ENCODE measurements at regions of chr19 and their contacts with region 1.

Region 1: DNA sequence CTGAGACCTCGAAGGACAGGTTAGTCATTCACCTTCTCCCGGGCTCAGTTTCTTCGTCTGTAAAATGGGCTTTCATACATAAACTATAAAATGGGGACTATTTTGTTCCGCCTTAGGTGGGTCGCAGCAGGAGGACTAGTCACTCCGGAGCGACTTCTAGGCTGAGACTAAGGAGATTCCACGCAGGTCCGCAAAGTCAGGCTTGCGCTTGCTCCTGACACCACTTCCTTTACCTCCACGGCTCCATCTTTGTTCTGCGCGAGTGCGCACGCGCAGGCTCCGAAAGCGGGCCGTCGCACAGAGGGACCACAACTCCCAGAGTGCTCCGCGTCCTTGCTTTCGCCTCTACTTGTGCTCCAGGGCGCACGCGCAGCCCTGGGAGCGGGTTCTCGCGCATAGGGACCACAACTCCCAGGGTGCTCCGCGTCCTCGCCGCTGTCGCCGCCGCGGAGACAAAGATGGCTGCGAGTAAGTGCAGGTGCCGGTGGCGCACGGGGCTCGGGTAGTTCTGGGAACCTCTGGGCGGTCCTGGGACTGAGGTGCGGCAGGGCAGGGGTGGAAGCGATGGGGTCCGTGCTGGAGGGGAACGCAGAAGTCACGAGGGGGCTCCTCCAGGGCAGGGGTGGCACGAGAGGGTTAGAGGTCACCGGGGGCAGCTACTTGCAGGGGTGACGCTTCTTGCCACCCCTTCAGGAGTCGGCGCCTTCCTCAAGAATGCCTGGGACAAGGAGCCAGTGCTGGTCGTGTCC is at the start of gene NDUFA3:
- DNase-seq: peak; percentile 96 to 100 (median 98)

Region 2: DNA sequence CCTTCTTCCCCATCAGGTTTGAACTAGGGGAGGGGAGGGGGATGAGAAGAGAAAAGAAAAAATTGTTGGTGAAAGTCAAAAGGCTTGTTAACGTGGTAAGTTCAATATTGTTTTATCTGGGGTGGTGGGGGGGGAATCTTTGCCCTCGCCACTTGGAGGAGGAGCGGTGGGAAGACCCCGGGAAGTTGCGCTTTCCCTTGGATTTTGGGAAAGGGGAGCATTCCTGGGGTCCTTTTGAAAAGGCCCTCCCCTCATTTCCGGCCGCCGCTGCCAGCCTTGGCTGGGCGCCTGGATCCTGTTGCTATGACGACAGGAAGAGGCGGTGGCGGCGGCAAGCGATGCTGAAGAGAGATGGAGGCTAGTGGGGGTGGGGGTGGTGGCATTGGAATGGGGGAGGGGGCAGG is 144.4 kb before region 1 on chr19:
- intact Hi-C with region 1: no loop called
- DNase-seq: peak; percentile 39 to 96 (median 68)

Region 3: DNA sequence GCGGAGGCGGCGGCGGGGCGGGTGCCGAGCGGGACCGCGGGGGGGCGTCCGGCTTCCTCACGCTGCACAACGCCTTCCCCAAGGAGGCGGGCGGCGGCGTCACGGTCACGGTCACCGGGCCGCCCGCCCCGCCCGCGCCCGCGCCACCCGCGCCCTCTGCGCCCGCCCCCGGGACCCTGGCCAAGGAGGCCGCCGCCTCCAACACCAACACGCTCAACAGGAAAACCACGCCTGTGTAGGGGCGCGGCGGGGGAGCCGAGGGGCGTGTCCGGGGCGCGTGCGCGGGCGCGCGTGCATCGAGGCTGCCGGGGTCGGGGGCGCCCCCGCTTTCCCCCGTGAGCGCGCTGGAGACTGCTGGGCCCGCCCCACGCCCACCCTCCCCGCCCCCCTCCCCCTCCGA is 120.0 kb before region 1 on chr19:
- intact Hi-C with region 1: loop called (anchors 10 kb)
- DNase-seq: peak in 1 of 10 donors; percentile 64

Region 4: DNA sequence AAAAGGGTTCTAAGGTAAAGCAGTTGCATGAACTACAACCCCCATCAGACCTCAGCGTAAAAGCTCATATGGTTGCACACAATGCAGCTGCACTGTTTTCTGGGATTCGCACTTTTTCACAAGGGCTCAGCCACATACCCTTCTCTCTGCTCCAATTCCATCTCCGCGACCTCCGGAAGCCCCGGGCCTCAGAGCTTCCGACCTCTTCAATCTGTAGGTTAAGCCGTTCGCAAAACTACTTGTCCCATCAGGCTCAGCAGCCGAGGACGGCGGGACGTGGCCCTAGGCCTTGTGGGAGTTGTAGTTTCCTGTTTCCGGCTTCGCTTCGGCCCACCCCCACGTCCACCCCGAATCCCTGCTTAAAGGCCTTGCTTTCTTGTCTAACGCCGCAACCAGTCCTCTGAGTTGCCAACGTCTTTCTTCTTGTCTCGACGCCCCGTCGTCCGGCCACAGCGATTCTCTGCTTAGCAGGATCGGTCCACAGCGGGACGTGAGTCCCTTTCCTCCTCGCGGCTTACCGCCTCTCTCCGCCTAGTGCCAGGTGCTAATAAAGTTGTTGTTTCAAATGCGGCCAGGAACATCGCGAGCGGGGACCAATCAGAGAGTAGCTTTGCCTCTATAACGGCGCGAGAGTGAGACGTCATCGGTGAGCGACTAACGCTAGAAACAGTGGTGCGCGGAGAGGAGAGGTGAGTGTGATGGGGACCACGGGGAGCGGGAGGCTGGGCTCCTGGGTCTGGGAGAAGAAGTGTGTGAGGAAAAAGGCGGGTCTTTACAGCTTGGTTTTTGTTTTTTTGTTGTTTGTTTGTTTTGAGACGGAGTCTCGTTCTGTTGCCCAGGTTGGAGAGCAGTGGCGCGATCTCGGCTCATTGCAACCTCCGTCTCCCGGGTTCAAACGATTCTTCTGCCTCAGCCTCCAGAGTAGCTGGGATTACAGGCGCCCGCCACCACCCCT is 12.8 kb after region 1 on chr19 and contains the starts of genes PRPF31 and TFPT:
- intact Hi-C with region 1: loop called (anchors 1 kb)
- DNase-seq: peak; percentile 90 to 99 (median 95)

Region 5: GRCh38 chr19:54137086-54137921 is 34.7 kb after region 1 on chr19 and contains the start of gene CNOT3:
- intact Hi-C with region 1: loop called (anchors 2 kb)
- DNase-seq: peak; percentile 98 to 100 (median 99)

Region 6: DNA sequence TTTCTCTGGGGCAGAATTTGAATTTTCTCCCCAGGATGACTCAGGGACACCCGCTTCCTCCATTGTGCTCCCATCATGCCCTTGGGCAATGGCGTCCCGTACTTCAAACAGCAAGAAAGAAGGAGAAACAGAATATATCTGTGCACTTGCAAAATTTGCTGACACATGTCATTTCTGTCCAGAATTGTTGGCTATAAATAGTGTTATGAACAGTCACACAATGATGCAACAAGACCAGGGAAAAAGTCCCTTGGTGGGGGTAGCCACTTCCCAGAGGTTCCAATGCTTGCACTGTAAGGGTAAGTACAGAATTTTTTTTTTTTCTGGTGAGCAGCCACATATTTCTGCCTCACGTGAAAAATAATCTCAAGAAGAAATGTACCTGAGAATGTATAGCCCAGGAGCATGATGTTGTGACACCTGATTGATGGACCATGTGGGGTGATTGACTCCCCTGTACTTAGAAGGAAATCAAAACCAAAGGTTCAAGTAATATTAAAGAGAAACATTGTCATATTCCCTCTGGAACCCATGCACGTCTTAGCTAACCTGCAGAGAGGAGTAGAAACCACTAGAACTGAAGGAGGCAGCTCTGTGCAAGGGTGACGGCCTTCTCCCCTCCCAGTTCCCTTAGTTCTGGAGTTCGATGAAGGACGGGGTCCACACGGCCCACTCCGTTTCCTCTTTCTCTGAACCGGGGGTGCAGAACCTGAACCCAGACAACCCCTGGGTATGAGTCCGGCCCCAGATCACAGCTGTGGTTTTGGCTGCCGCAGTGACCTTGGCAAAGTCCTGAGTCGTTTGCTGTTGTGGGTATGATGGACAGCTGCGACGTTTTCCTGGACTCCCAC is 271.4 kb after region 1 on chr19:
- intact Hi-C with region 1: no loop called
- DNase-seq: peak in 1 of 10 donors; percentile 52

Measured in posterior cingulate gyrus (tissue), 11 donors.